Common myeloid progenitor, CD34-positive (primary cell): ENCODE measurements at regions of chr1 and their contacts with region 1.

Region 1: DNA sequence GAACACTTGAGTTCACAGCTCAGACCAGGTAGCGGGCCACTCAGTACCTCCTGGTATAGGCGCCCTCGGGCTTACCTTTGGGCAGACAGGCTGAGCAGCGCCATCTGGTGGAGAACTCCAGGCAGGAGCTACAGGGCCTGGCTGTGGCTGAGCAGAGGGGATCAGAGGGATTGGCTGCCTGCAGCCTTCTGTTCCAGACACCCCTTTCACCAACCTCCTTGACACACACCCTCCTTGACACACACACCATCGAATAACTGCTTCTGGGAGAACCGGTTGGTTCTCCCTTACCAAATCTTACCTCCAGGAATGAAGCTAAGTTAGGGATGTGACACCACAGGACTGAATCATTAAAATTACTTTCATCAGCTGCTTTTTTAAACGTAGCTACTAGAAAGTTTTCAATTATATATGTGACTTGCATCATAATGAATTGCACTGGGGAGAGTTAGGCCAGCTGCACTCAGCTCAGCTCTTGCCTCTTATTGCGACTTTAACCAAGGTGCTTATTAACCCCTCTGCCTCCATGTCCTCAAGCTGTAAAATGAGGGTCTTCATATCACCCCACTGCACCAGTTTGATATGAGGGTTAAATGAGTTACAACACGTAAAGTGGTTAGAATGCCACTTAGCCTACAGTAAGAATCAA is 6.6 kb downstream of the LIN28A start:
- DNase-seq: peak; percentile 77 to 85 (median 81)
- H3K4me3 ChIP-seq: no peak overlapping the region
- H3K27ac ChIP-seq: no peak overlapping the region
- H3K4me1 ChIP-seq: peaks cover 0 to 3% (median 2%) of the 10 kb centered on the region in 4 experiments
- H3K27me3 ChIP-seq: peaks cover 8 to 46% (median 20%) of the 10 kb centered on the region in 5 experiments

Region 2: DNA sequence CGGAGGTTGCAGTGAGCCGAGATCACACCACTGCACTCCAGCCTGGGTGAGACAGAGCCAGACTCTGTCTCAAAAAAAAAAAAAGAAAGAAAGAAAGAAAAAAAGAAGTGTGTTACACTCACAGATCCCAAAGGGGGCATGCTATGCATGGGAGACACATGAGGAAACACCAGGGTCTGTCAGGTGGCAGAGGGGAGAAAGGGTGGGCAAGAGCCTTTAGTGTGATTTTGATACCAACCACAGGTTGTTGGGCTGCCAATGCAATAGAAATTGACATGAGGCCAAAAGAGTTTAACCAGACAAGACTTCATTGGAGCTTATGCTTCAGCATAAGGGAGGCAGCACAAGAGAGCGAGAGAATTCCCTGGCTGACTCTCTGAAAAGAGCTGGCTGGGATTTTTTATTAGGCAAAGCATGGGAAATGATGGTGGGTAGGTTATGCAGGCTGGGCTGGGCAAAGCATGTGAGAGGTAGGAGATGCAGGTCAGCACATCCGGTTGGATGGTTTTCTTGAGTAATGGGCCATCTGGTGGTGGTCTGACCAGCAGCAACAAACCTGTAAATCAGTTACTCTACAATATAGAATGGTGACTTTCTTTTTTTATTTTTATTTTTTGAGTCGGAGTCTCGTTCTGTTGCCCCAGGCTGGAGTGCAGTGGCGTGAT is 407.3 kb before region 1 on chr1:
- CTCF ChIA-PET with region 1: no interaction called
- POLR2A ChIA-PET with region 1: no interaction called
- DNase-seq: peak; percentile 42 to 70 (median 51)
- H3K4me3 ChIP-seq: no peak overlapping the region
- H3K27ac ChIP-seq: no peak overlapping the region
- H3K4me1 ChIP-seq: peaks cover 0 to 2% (median 0%) of the 10 kb centered on the region in 4 experiments
- H3K27me3 ChIP-seq: no peaks in the 10 kb centered on the region

Region 3: GRCh38 chr1:26373281-26373680 is 44.0 kb before region 1 on chr1:
- CTCF ChIA-PET with region 1: interaction called, 12 read pairs
- POLR2A ChIA-PET with region 1: interaction called, 3 read pairs
- DNase-seq: no peak
- H3K4me3 ChIP-seq: no peak overlapping the region
- H3K27ac ChIP-seq: no peak overlapping the region
- H3K4me1 ChIP-seq: peaks cover 12 to 81% (median 65%) of the 10 kb centered on the region in 4 experiments
- H3K27me3 ChIP-seq: no peaks in the 10 kb centered on the region

Region 4: DNA sequence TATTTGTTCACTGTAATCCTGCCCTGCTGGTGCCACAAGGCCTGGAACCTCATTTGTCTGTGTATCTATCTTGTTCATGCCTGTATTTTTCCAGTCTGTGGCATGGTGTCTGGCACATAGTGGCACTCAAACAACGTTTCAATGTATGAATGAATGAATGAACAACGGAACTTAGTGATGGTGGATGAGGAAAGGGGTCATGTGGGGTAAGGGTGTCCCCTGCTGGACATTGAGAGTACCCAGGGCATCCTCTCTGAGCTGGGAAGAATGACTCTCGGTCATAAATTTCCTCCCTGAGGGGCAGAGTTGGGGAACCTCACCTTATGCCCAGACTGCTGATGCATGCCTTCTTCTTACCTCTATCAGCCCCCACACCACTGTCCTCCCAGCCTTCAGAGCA is 25.8 kb before region 1 on chr1:
- CTCF ChIA-PET with region 1: interaction called, 14 read pairs
- POLR2A ChIA-PET with region 1: no interaction called
- DNase-seq: peak; percentile 60 to 84 (median 79)
- H3K4me3 ChIP-seq: no peak overlapping the region
- H3K27ac ChIP-seq: no peak overlapping the region
- H3K4me1 ChIP-seq: peaks cover 0 to 29% (median 0%) of the 10 kb centered on the region in 4 experiments
- H3K27me3 ChIP-seq: no peaks in the 10 kb centered on the region

Region 5: DNA sequence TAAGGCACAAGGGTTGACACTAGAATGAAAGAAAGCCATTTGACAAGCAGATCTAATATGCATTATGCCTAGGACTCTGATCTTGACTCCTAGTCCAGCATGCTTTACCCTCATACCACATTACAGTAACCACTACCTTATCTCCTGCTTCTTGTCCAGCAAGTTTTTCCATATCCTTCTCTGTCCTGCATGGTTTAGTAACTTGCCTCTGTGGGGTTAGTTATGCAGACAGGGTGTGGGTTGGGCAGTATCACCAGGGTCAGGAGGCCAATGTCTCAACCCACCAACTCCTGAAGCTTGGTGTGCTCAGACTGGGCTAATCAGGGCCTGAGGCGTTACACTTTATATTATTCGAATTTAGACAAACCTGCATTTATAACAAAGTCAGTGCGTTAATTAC is 33.7 kb after region 1 on chr1:
- CTCF ChIA-PET with region 1: no interaction called
- POLR2A ChIA-PET with region 1: no interaction called
- DNase-seq: no peak
- H3K4me3 ChIP-seq: no peak overlapping the region
- H3K27ac ChIP-seq: no peak overlapping the region
- H3K4me1 ChIP-seq: no peaks in the 10 kb centered on the region
- H3K27me3 ChIP-seq: no peaks in the 10 kb centered on the region

Region 6: DNA sequence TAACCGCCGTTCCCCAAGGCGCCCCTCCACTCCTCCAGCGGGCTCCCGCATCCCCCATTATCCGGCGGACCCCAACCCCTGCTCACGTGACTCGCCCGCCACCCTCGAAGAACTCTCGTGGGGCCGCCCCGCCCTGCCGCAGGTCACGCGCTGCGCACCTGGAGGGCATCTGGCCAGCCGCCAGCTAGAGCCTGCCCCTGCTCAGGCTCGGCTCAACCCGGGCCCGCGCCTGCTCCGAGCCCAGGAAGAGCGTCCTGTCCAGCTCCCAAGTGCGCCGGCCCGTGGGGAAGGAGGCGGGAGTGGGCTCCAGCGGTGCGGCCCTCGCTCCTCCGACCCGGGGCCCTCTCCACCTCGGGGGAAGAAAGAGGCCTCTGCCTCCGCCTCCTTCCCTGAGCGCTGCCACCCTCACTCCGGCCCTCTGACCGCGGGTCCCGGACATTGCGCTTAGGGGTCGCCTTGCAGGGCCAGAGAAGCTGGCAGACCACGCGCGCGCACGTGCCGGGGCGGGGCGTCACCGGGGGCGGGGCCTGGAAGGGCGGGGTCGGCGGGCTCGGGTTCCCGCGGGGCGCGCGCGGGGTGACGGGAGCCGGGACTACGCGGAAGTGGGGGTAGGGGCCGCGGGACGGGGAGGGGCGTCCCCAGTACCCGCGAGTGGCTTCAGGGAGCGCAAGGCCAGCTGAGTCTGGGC is 83.4 kb after region 1 on chr1:
- CTCF ChIA-PET with region 1: no interaction called
- POLR2A ChIA-PET with region 1: no interaction called
- DNase-seq: peak; percentile 75 to 87 (median 83)
- H3K4me3 ChIP-seq: peak overlapping the region; percentile 62 to 94 (median 83)
- H3K27ac ChIP-seq: peak overlapping the region; percentile 50 to 86
- H3K4me1 ChIP-seq: peaks cover 0 to 31% (median 29%) of the 10 kb centered on the region in 4 experiments
- H3K27me3 ChIP-seq: no peaks in the 10 kb centered on the region